ENCODE measurements at regions of chr20 and their contacts with region 1.

Region 1: GRCh38 chr20:10611357-10611756 is 62.4 kb downstream of the JAG1 start:
- DNase-seq: peak; percentile 44
- ATAC-seq: peak; percentile 97
- H3K4me3 ChIP-seq: no peak overlapping the region
- H3K27ac ChIP-seq: no peak overlapping the region
- H3K4me1 ChIP-seq: peaks cover under 1% of the 10 kb centered on the region
- H3K27me3 ChIP-seq: no peaks in the 10 kb centered on the region
- CTCF ChIP-seq: peak; percentile 83
- EP300 ChIP-seq: peak in 1 of 2 experiments; percentile 15; a peak in 1 of 4 replicates
- POLR2A ChIP-seq: no peak
- RAD21 ChIP-seq: peak; percentile 57

Region 2: DNA sequence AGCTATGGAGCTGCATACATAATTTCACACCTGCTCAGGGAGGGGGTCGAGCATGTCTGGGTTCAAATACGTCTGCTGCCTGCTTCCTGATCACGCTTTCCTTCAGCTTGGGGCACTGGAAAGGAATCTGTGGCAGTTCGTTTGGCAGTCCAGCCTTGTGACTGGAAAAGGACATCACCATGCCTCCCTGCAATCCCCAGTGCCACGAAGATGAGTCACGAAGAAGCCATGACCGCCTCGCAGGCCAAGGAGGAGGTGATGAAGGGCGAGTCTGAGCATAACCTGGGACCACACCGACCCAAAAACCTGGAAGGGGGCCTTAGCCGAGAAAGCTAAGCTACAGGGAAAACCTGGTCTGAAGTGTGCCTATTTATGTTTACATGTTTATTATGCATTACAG is 49.3 kb after region 1 on chr20:
- CTCF ChIA-PET with region 1: no interaction called
- POLR2A ChIA-PET with region 1: no interaction called
- in situ Hi-C with region 1: no loop called
- intact Hi-C with region 1: no loop called
- DNase-seq: no peak
- ATAC-seq: no peak; the same call in 2 of the 3 replicates
- H3K4me3 ChIP-seq: no peak overlapping the region
- H3K27ac ChIP-seq: peak overlapping the region; percentile 7
- H3K4me1 ChIP-seq: peaks cover 71% of the 10 kb centered on the region
- H3K27me3 ChIP-seq: no peaks in the 10 kb centered on the region
- CTCF ChIP-seq: no peak
- EP300 ChIP-seq: no peak
- POLR2A ChIP-seq: no peak; a peak in 1 of 4 replicates
- RAD21 ChIP-seq: no peak

Region 3: DNA sequence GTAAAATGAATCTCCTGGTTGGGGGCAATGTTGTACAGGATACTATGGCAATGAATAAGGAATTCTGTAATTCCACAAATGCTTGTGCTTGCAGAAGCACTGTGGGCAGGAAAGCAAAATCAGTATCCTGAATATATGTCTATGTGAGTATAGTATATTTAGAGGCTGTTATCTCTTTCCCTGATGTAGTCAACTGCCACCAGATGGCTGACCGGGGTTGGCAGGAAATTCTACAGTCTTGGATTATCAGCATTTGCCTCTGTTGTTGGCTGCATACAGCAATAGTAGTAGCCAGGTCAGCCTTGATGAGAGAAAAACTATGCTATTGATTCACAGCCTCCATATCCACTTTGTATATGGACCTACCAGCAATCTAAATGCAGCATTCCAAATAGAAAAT is 487.5 kb after region 1 on chr20:
- CTCF ChIA-PET with region 1: no interaction called
- POLR2A ChIA-PET with region 1: no interaction called
- in situ Hi-C with region 1: no loop called
- intact Hi-C with region 1: loop called (anchors 1 kb)
- DNase-seq: no peak
- ATAC-seq: peak; percentile 75
- H3K4me3 ChIP-seq: no peak overlapping the region
- H3K27ac ChIP-seq: no peak overlapping the region
- H3K4me1 ChIP-seq: no peaks in the 10 kb centered on the region
- H3K27me3 ChIP-seq: no peaks in the 10 kb centered on the region
- CTCF ChIP-seq: peak; percentile 43; the same call in 1 of the 2 replicates
- EP300 ChIP-seq: no peak
- POLR2A ChIP-seq: no peak
- RAD21 ChIP-seq: no peak

Measured in HepG2 (cell line).